B cell (primary cell): ENCODE measurements at regions of chr2 and their contacts with region 1.

Region 1: GRCh38 chr2:70190418-70191243 is at the start of gene C2orf42:
- DNase-seq: peak; percentile 99
- ATAC-seq: peak; percentile 87
- H3K4me3 ChIP-seq: peak within 1 kb of the TSS; percentile 72 to 98 (median 80)
- H3K4me3 Mint-ChIP-seq: peak within 1 kb of the TSS; percentile 88
- H3K27ac ChIP-seq: peak within 1 kb of the TSS; percentile 98 to 99
- H3K27ac Mint-ChIP-seq: peak within 1 kb of the TSS; percentile 98
- H3K4me1 ChIP-seq: peaks cover 9 to 11% of the 10 kb centered on the region in 2 donors
- H3K4me1 Mint-ChIP-seq: peaks cover 18% of the 10 kb centered on the region
- H3K27me3 ChIP-seq: no peaks in the 10 kb centered on the region
- H3K27me3 Mint-ChIP-seq: no peaks in the 10 kb centered on the region
- CTCF ChIP-seq: no peak
- total RNA-seq, gene C2orf42: 42.9 and 45.2 TPM in 2 replicates

Region 2: GRCh38 chr2:70062268-70062667 is 128.4 kb before region 1 on chr2:
- CTCF ChIA-PET with region 1: no interaction called
- POLR2A ChIA-PET with region 1: interaction called, 10 read pairs
- intact Hi-C with region 1: no loop called
- DNase-seq: no peak
- ATAC-seq: no peak
- H3K4me3 ChIP-seq: no peak overlapping the region
- H3K4me3 Mint-ChIP-seq: no peak overlapping the region
- H3K27ac ChIP-seq: no peak overlapping the region
- H3K27ac Mint-ChIP-seq: no peak overlapping the region
- H3K4me1 ChIP-seq: no peaks in the 10 kb centered on the region
- H3K4me1 Mint-ChIP-seq: peaks cover 3% of the 10 kb centered on the region
- H3K27me3 ChIP-seq: no peaks in the 10 kb centered on the region
- H3K27me3 Mint-ChIP-seq: no peaks in the 10 kb centered on the region
- CTCF ChIP-seq: no peak

Region 3: GRCh38 chr2:70086838-70087701 is 103.6 kb before region 1 on chr2 and contains the start of gene PCBP1:
- CTCF ChIA-PET with region 1: interaction called, 4 read pairs
- POLR2A ChIA-PET with region 1: interaction called, 12 read pairs
- intact Hi-C with region 1: loop called (anchors 1 kb)
- DNase-seq: peak; percentile 97
- ATAC-seq: peak; percentile 60
- H3K4me3 ChIP-seq: peak within 1 kb of the TSS; percentile 66 to 99 (median 98)
- H3K4me3 Mint-ChIP-seq: peak within 1 kb of the TSS; percentile 94
- H3K27ac ChIP-seq: peak within 1 kb of the TSS; percentile 97 to 100
- H3K27ac Mint-ChIP-seq: peak within 1 kb of the TSS; percentile 100
- H3K4me1 ChIP-seq: peaks cover 63 to 73% of the 10 kb centered on the region in 2 donors
- H3K4me1 Mint-ChIP-seq: peaks cover 74% of the 10 kb centered on the region
- H3K27me3 ChIP-seq: no peaks in the 10 kb centered on the region
- H3K27me3 Mint-ChIP-seq: no peaks in the 10 kb centered on the region
- CTCF ChIP-seq: no peak
- total RNA-seq, gene PCBP1: 304 and 327 TPM in 2 replicates

Region 4: DNA sequence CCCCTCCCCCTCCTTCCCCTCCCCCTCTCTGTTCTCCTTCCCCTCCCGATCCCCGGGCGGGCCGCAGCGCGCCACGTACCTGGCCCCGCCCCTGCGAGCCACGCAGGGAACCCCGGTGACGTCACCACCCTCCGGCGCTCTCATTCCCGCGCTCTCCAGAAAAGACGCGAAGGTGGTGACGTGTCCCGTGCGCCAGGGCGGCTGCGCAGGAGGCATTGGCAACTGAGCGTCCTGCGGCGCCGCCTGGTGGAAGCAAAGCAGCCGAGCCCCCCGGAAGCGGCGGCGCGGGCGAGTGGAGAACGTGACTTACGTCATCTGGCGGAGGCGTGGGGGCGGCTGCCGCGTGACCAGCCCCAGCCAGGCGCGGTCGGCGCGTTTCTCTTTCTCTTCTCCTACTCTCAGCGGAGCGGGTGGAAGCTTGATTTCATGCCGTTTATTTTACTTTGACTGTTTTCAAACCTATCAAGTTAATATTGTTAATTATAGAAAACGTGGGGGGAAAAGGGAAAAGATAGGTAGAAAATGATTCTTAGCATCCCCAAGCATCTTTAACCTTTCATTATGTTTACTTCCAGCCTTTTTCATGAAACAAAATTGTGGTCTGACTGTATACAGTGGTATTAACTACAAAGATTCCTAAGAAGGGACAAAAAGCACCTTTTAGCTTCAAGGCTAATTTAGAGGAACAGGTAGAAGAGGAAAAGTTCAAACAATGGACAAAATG is 47.9 kb before region 1 on chr2:
- CTCF ChIA-PET with region 1: interaction called, 13 read pairs
- POLR2A ChIA-PET with region 1: interaction called, 29 read pairs
- intact Hi-C with region 1: loop called (anchors 1 kb)
- DNase-seq: peak; percentile 100
- ATAC-seq: peak; percentile 75
- H3K4me3 ChIP-seq: peak overlapping the region; percentile 61 to 91 (median 71)
- H3K4me3 Mint-ChIP-seq: peak overlapping the region; percentile 91
- H3K27ac ChIP-seq: peak overlapping the region; percentile 97 to 98
- H3K27ac Mint-ChIP-seq: peak overlapping the region; percentile 98
- H3K4me1 ChIP-seq: peaks cover 24 to 32% of the 10 kb centered on the region in 2 donors
- H3K4me1 Mint-ChIP-seq: peaks cover 50% of the 10 kb centered on the region
- H3K27me3 ChIP-seq: no peaks in the 10 kb centered on the region
- H3K27me3 Mint-ChIP-seq: no peaks in the 10 kb centered on the region
- CTCF ChIP-seq: peak; percentile 88

Region 5: GRCh38 chr2:70248181-70248847 is 57.7 kb after region 1 on chr2 and contains the start of gene TIA1:
- CTCF ChIA-PET with region 1: interaction called, 3 read pairs
- POLR2A ChIA-PET with region 1: no interaction called
- intact Hi-C with region 1: loop called (anchors 1 kb)
- DNase-seq: peak; percentile 99
- ATAC-seq: peak; percentile 96
- H3K4me3 ChIP-seq: peak within 1 kb of the TSS; percentile 70 to 98 (median 95)
- H3K4me3 Mint-ChIP-seq: peak within 1 kb of the TSS; percentile 98
- H3K27ac ChIP-seq: peak within 1 kb of the TSS; percentile 86 to 94
- H3K27ac Mint-ChIP-seq: peak within 1 kb of the TSS; percentile 98
- H3K4me1 ChIP-seq: peaks cover 24 to 29% of the 10 kb centered on the region in 2 donors
- H3K4me1 Mint-ChIP-seq: peaks cover 35% of the 10 kb centered on the region
- H3K27me3 ChIP-seq: no peaks in the 10 kb centered on the region
- H3K27me3 Mint-ChIP-seq: no peaks in the 10 kb centered on the region
- CTCF ChIP-seq: no peak
- total RNA-seq, gene TIA1: 214 and 243 TPM in 2 replicates

Region 6: GRCh38 chr2:70994756-70995729 is 804.4 kb after region 1 on chr2 and contains the start of gene TEX261:
- CTCF ChIA-PET with region 1: no interaction called
- POLR2A ChIA-PET with region 1: no interaction called
- intact Hi-C with region 1: loop called (anchors 2 kb)
- DNase-seq: peak; percentile 92
- ATAC-seq: peak; percentile 97
- H3K4me3 ChIP-seq: peak within 1 kb of the TSS; percentile 81 to 93 (median 89)
- H3K4me3 Mint-ChIP-seq: peak within 1 kb of the TSS; percentile 96
- H3K27ac ChIP-seq: peak within 1 kb of the TSS; percentile 32 to 77
- H3K27ac Mint-ChIP-seq: peak within 1 kb of the TSS; percentile 92
- H3K4me1 ChIP-seq: peaks cover 21 to 23% of the 10 kb centered on the region in 2 donors
- H3K4me1 Mint-ChIP-seq: peaks cover 34% of the 10 kb centered on the region
- H3K27me3 ChIP-seq: no peaks in the 10 kb centered on the region
- H3K27me3 Mint-ChIP-seq: no peaks in the 10 kb centered on the region
- CTCF ChIP-seq: peak; percentile 59
- total RNA-seq, gene TEX261: 54.0 and 56.4 TPM in 2 replicates